Activated T-helper 1 cell treated with anti-CD3 and anti-CD28 coated beads, Interleukin-12 subunit alpha, Interleukin-12 subunit beta, Interleukin-2, Interleukin-4 antibody, amounts not matched to agents 30 ng/mL and 10 ng/mL and 1 ng/mL, durations not matched to agents 14 hours and 24 hours and 36 hours (primary cell): ENCODE measurements at regions of chr5 and their contacts with region 1.

Region 1: GRCh38 chr5:112707187-112708102 is 30.2 kb upstream of the APC start:
- DNase-seq: peak; percentile 96
- H3K4me3 Mint-ChIP-seq: peak overlapping the region; percentile 94
- H3K27ac Mint-ChIP-seq: peak overlapping the region; percentile 81
- H3K4me1 Mint-ChIP-seq: peaks cover 37% of the 10 kb centered on the region
- H3K27me3 Mint-ChIP-seq: peaks cover 8% of the 10 kb centered on the region

Region 2: DNA sequence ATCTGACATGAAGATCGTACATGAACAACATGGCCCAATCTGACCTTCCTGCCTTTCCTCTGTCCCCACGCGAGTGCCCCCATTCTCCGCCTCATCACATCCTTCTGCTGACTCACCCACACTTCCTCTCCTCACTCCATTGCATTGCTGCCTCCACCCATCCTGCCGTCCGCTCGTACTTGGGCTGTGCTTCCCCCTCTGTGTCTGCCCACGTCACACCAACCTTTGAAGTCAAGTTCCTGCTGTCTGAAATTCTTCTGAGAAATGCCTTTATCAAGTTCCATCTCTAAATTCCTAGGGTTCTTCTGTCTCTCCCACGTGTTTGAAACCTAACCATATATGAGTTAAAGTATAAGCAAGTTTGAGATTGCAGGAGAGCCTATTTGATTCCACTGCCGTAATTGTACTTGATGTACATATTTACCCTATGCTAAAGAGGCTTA is 1177.1 kb before region 1 on chr5:
- intact Hi-C with region 1: loop called (anchors 5 kb)
- DNase-seq: peak; percentile 82
- H3K4me3 Mint-ChIP-seq: peak overlapping the region; percentile 38
- H3K27ac Mint-ChIP-seq: peak overlapping the region; percentile 89
- H3K4me1 Mint-ChIP-seq: peaks cover 33% of the 10 kb centered on the region
- H3K27me3 Mint-ChIP-seq: no peaks in the 10 kb centered on the region

Region 3: GRCh38 chr5:111792471-111793058 is 914.9 kb before region 1 on chr5:
- intact Hi-C with region 1: no loop called
- DNase-seq: no peak
- H3K4me3 Mint-ChIP-seq: no peak overlapping the region
- H3K27ac Mint-ChIP-seq: no peak overlapping the region
- H3K4me1 Mint-ChIP-seq: no peaks in the 10 kb centered on the region
- H3K27me3 Mint-ChIP-seq: peaks cover 16% of the 10 kb centered on the region

Region 4: DNA sequence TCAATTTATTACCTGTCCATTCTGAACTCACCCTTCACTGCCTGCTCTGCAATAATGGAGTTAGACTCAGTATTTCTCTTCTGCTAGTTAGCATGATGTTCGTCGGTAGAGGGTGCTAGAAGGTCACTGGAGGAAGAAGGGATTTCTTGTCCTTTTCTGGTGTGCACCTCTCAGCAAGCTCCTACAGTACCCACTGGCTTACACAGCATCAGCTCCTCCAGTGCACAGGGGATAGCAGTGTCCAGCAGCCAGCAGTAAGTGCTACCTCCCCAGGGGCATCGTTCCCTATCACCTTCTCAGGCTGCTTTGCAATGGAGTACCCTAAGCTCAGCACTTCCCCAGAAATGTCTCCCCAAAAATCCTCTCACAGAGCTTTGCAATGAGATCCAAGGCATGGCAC is 15.7 kb before region 1 on chr5:
- intact Hi-C with region 1: no loop called
- DNase-seq: peak; percentile 13
- H3K4me3 Mint-ChIP-seq: no peak overlapping the region
- H3K27ac Mint-ChIP-seq: no peak overlapping the region
- H3K4me1 Mint-ChIP-seq: no peaks in the 10 kb centered on the region
- H3K27me3 Mint-ChIP-seq: peaks cover 36% of the 10 kb centered on the region

Region 5: GRCh38 chr5:112757468-112758208 is 50.2 kb after region 1 on chr5:
- intact Hi-C with region 1: loop called (anchors 5 kb)
- DNase-seq: no peak
- H3K4me3 Mint-ChIP-seq: no peak overlapping the region
- H3K27ac Mint-ChIP-seq: no peak overlapping the region
- H3K4me1 Mint-ChIP-seq: peaks cover 4% of the 10 kb centered on the region
- H3K27me3 Mint-ChIP-seq: peaks cover 2% of the 10 kb centered on the region

Region 6: GRCh38 chr5:112968411-112969106 is 261.1 kb after region 1 on chr5:
- intact Hi-C with region 1: loop called (anchors 1 kb)
- DNase-seq: no peak
- H3K4me3 Mint-ChIP-seq: no peak overlapping the region
- H3K27ac Mint-ChIP-seq: no peak overlapping the region
- H3K4me1 Mint-ChIP-seq: peaks cover 33% of the 10 kb centered on the region
- H3K27me3 Mint-ChIP-seq: no peaks in the 10 kb centered on the region

Region 7: DNA sequence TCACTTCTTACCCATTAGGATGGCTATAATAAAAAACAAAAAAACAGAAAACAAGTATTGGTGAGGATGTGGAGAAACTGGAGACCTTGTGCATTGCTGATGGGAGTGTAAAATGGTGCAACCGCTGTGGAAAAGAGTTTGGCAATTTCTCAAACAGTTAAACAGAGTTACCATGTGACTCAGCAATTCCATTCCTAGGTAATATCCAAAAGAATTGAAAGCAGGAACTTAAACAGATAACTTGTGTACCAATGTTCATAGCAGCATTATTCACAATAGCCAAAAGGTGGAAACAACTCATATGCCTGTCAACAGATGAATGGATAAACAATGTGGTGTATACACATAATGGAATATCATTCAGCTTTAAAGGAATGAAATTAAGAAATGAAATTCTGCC is 298.0 kb after region 1 on chr5:
- intact Hi-C with region 1: no loop called
- DNase-seq: no peak
- H3K4me3 Mint-ChIP-seq: no peak overlapping the region
- H3K27ac Mint-ChIP-seq: no peak overlapping the region
- H3K4me1 Mint-ChIP-seq: peaks cover 5% of the 10 kb centered on the region
- H3K27me3 Mint-ChIP-seq: no peaks in the 10 kb centered on the region

Region 8: GRCh38 chr5:113294311-113295110 is 587.1 kb after region 1 on chr5:
- intact Hi-C with region 1: loop called (anchors 1 kb)
- DNase-seq: peak; percentile 62
- H3K4me3 Mint-ChIP-seq: peak overlapping the region; percentile 89
- H3K27ac Mint-ChIP-seq: peak overlapping the region; percentile 8
- H3K4me1 Mint-ChIP-seq: peaks cover 18% of the 10 kb centered on the region
- H3K27me3 Mint-ChIP-seq: peaks cover 69% of the 10 kb centered on the region